Activated CD8-positive, alpha-beta memory T cell treated with anti-CD3 and anti-CD28 coated beads, Interleukin-2, amount 10 ng/mL, durations not matched to agents 7 days and 5 days (primary cell): ENCODE measurements at regions of chr12 and their contacts with region 1.

Region 1: DNA sequence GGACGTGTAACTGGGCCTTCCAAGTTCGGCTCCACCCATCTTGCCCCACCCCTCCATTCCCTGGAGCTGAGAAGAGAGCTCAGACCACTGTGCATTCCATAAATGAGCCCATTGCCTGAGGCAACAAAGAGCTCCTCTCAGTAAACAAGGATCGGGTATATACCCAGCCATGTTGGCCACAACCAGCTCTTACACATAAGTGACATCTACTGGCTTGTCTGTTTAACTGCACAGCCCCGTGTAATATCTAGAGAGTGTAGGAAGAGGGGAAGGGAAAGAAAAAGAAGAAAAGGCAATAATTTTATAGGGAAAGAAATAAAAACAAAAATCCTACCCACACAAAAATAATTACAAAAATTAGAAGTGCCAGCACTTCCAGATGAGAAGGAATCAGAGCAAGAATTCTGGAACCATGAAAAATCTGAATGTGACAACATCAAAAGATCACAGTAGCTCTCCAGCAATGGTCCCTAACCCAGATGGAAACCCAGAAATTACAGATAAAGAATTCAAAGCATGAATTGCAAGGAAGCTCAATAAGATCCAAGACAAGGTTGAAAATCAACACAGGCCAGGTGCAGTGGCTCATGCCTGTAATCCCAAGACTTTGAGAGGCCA is 308.1 kb downstream of the RPAP3 start:
- DNase-seq: peak; percentile 75
- ATAC-seq: peak; percentile 88
- H3K4me3 Mint-ChIP-seq: no peak overlapping the region
- H3K27ac Mint-ChIP-seq: peak overlapping the region; percentile 87
- H3K4me1 Mint-ChIP-seq: peaks cover 71% of the 10 kb centered on the region
- H3K27me3 Mint-ChIP-seq: no peaks in the 10 kb centered on the region

Region 2: GRCh38 chr12:47079468-47079980 is 318.2 kb before region 1 on chr12 and contains the starts of genes AMIGO2 and PCED1B:
- CTCF ChIA-PET with region 1: interaction called, 40 read pairs
- DNase-seq: peak; percentile 84
- ATAC-seq: peak; percentile 62
- H3K4me3 Mint-ChIP-seq: peak within 1 kb of the TSS; percentile 87
- H3K27ac Mint-ChIP-seq: peak within 1 kb of the TSS; percentile 80
- H3K4me1 Mint-ChIP-seq: peaks cover 63% of the 10 kb centered on the region
- H3K27me3 Mint-ChIP-seq: no peaks in the 10 kb centered on the region
- total RNA-seq, gene AMIGO2: 11.6 to 14.2 TPM
- total RNA-seq, gene PCED1B: 44.3 to 63.2 TPM

Region 3: GRCh38 chr12:47207340-47207717 is 190.4 kb before region 1 on chr12:
- CTCF ChIA-PET with region 1: interaction called, 32 read pairs
- DNase-seq: peak; percentile 79
- ATAC-seq: peak; percentile 66
- H3K4me3 Mint-ChIP-seq: peak overlapping the region; percentile 64
- H3K27ac Mint-ChIP-seq: peak overlapping the region; percentile 92
- H3K4me1 Mint-ChIP-seq: peaks cover 67% of the 10 kb centered on the region
- H3K27me3 Mint-ChIP-seq: no peaks in the 10 kb centered on the region

Region 4: DNA sequence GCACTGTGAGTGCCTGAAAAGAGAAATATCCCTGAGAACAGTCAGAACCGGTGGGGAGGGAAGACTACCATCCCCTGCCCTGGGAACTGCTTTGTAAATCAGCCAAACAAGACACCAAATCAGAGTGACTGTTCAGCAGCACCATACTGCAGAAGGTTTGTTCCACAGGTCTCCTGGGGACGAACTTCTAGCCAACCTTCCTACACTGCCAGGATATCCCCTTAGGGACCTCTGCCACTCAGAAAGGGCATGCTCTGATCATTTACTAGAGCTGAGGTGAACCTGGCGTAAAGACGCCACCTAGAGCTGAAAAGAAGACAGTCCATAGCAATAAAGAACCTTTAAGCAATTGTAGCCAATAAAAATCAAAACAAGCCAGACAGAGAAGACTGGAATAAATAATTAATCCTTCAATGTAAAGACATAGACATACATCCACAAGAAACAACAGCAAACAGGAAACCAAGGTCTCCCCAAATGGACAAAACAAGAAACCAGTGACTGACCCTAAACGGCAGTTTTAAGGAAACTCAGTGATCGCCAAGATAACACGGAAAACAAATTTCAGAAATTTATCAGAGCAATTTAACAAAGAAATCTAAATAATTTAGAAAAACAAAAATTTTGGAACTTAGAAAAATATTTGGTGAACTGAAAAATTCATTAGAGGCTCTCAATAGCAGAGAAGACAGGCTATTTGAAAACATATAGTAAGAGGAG is 89.9 kb before region 1 on chr12:
- CTCF ChIA-PET with region 1: interaction called, 15 read pairs
- DNase-seq: peak; percentile 74
- ATAC-seq: peak; percentile 99
- H3K4me3 Mint-ChIP-seq: peak overlapping the region; percentile 62
- H3K27ac Mint-ChIP-seq: peak overlapping the region; percentile 74
- H3K4me1 Mint-ChIP-seq: peaks cover 33% of the 10 kb centered on the region
- H3K27me3 Mint-ChIP-seq: no peaks in the 10 kb centered on the region

Region 5: GRCh38 chr12:47356129-47356700 is 41.6 kb before region 1 on chr12:
- CTCF ChIA-PET with region 1: interaction called, 55 read pairs
- DNase-seq: peak; percentile 52
- ATAC-seq: peak; percentile 15
- H3K4me3 Mint-ChIP-seq: peak overlapping the region; percentile 49
- H3K27ac Mint-ChIP-seq: peak overlapping the region; percentile 93
- H3K4me1 Mint-ChIP-seq: peaks cover 63% of the 10 kb centered on the region
- H3K27me3 Mint-ChIP-seq: no peaks in the 10 kb centered on the region

Region 6: DNA sequence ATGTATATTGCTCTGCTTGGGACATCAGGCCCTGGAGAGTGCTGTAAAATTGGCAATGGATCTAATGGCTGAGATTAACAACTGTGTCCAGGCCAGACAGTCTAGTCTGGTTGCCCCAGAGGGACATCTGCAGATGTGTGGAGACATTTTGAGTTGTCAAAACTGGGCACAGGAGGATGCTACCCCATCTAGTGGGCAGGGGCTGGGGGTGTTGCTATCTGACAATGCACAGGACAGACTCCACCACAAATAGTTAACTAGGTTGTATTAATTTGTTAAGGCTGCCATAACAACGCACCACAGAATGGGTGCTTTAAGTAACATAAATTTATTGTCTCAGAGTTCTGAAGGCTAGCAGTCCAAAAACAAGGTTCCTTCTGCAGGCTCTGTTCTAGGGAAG is 15.5 kb before region 1 on chr12:
- CTCF ChIA-PET with region 1: interaction called, 15 read pairs
- DNase-seq: no peak
- ATAC-seq: no peak
- H3K4me3 Mint-ChIP-seq: no peak overlapping the region
- H3K27ac Mint-ChIP-seq: no peak overlapping the region
- H3K4me1 Mint-ChIP-seq: peaks cover 13% of the 10 kb centered on the region
- H3K27me3 Mint-ChIP-seq: no peaks in the 10 kb centered on the region